IMR-90 (cell line): ENCODE measurements at regions of chr14 and their contacts with region 1.

Region 1: GRCh38 chr14:100306420-100307219 is at the start of gene SLC25A29:
- DNase-seq: peak; percentile 78
- ATAC-seq: peak; percentile 91
- H3K4me3 ChIP-seq: peak within 1 kb of the TSS; percentile 88
- H3K27ac ChIP-seq: peak within 1 kb of the TSS; percentile 88
- H3K4me1 ChIP-seq: peaks cover 15% of the 10 kb centered on the region; the same call in 1 of the 2 replicates
- H3K27me3 ChIP-seq: no peaks in the 10 kb centered on the region
- CTCF ChIP-seq: no peak
- POLR2A ChIP-seq: peak; percentile 56; the same call in 1 of the 2 replicates
- RAD21 ChIP-seq: no peak
- total RNA-seq, gene SLC25A29: 6.5 and 6.9 TPM in 2 replicates

Region 2: DNA sequence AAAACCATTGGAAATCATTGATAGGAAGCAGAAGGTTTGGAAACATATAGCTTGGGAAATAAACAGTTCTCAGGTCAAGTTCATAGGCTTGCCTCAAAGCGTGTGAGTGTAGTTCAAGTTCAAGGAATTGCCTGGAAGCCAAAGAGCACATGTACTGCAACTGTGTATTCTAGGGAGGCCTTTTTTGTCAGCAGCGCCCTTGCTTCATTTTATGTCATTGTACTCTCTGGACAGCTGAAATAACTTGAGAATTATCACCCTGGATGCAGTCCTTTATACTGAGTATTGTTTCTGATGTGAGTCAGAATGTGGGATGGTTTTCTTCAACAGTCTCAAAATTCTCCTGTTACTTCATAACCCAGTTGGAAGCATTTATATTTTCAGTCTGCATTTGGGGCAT is 257.4 kb before region 1 on chr14:
- CTCF ChIA-PET with region 1: no interaction called
- POLR2A ChIA-PET with region 1: no interaction called
- dilution Hi-C with region 1: no loop called
- in situ Hi-C with region 1: no loop called
- intact Hi-C with region 1: no loop called
- DNase-seq: peak; percentile 72
- ATAC-seq: peak; percentile 56
- H3K4me3 ChIP-seq: no peak overlapping the region
- H3K27ac ChIP-seq: no peak overlapping the region
- H3K4me1 ChIP-seq: peaks cover 14% of the 10 kb centered on the region
- H3K27me3 ChIP-seq: no peaks in the 10 kb centered on the region
- CTCF ChIP-seq: no peak
- POLR2A ChIP-seq: no peak
- RAD21 ChIP-seq: no peak

Region 3: GRCh38 chr14:100325231-100325632 is 18.6 kb after region 1 on chr14:
- CTCF ChIA-PET with region 1: no interaction called
- POLR2A ChIA-PET with region 1: no interaction called
- dilution Hi-C with region 1: no loop called
- in situ Hi-C with region 1: no loop called
- intact Hi-C with region 1: no loop called
- DNase-seq: no peak
- ATAC-seq: no peak; the same call in 1 of the 2 replicates
- H3K4me3 ChIP-seq: no peak overlapping the region
- H3K27ac ChIP-seq: no peak overlapping the region
- H3K4me1 ChIP-seq: no peaks in the 10 kb centered on the region
- H3K27me3 ChIP-seq: no peaks in the 10 kb centered on the region; the same call in 1 of the 2 replicates
- CTCF ChIP-seq: no peak
- POLR2A ChIP-seq: no peak
- RAD21 ChIP-seq: no peak

Region 4: GRCh38 chr14:100341301-100342031 is 34.8 kb after region 1 on chr14:
- CTCF ChIA-PET with region 1: no interaction called
- POLR2A ChIA-PET with region 1: no interaction called
- dilution Hi-C with region 1: no loop called
- in situ Hi-C with region 1: no loop called
- intact Hi-C with region 1: loop called (anchors 5 kb)
- DNase-seq: peak; percentile 95
- ATAC-seq: peak; percentile 87
- H3K4me3 ChIP-seq: no peak overlapping the region
- H3K27ac ChIP-seq: peak overlapping the region; percentile 98
- H3K4me1 ChIP-seq: peaks cover 12% of the 10 kb centered on the region
- H3K27me3 ChIP-seq: no peaks in the 10 kb centered on the region
- CTCF ChIP-seq: no peak
- POLR2A ChIP-seq: no peak
- RAD21 ChIP-seq: no peak

Region 5: GRCh38 chr14:100362311-100362927 is 55.8 kb after region 1 on chr14:
- CTCF ChIA-PET with region 1: no interaction called
- POLR2A ChIA-PET with region 1: no interaction called
- dilution Hi-C with region 1: no loop called
- in situ Hi-C with region 1: no loop called
- intact Hi-C with region 1: loop called (anchors 5 kb)
- DNase-seq: peak; percentile 77
- ATAC-seq: peak; percentile 91
- H3K4me3 ChIP-seq: no peak overlapping the region
- H3K27ac ChIP-seq: peak overlapping the region; percentile 99
- H3K4me1 ChIP-seq: peaks cover 31% of the 10 kb centered on the region
- H3K27me3 ChIP-seq: no peaks in the 10 kb centered on the region
- CTCF ChIP-seq: no peak
- POLR2A ChIP-seq: no peak
- RAD21 ChIP-seq: no peak

Region 6: DNA sequence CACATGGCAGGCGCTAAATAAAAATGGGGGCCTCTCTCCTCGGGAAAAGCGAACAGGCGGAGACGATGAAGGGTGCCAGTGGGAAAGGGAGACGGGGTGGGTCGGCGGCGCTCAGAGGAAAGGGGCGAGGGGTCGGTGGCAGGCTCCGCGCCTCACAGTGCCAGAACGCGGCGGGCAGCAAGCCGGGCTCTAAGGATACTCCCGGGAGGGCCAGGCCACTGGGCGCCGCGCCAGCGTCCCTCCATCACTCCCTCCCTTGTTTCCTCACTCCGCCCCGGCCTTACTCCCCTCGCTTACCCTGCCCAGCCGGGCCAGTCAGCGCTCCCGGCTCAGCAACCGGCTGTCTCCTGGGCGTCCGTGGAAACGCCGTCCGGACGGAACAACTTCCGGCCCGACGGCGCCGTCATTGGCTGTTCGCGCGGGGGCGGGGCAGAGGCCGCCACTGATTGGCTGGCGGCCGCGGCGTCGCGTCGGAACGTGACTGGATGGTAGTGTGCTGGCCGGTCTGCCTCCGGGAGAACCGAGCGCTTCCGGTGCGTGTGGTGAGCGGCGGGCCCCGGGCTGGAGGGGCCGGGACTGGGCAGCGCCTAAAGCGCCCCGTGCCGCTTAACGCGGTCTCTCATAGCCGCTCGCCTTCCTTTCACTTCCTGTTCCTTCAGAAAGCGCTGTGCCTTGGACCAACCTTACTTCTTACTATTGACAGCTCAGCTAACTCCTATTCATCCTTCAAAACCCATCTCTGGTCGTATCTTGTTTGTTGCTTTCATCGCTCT is 69.5 kb after region 1 on chr14:
- CTCF ChIA-PET with region 1: interaction called, 4 read pairs
- POLR2A ChIA-PET with region 1: interaction called, 3 read pairs
- dilution Hi-C with region 1: no loop called
- in situ Hi-C with region 1: no loop called
- intact Hi-C with region 1: loop called (anchors 2 kb)
- DNase-seq: peak; percentile 95
- ATAC-seq: peak; percentile 81
- H3K4me3 ChIP-seq: peak within 1 kb of the TSS; percentile 77
- H3K27ac ChIP-seq: peak within 1 kb of the TSS; percentile 96
- H3K4me1 ChIP-seq: peaks cover 11% of the 10 kb centered on the region
- H3K27me3 ChIP-seq: no peaks in the 10 kb centered on the region
- CTCF ChIP-seq: no peak
- POLR2A ChIP-seq: peak; percentile 96
- RAD21 ChIP-seq: no peak